Tibial artery (tissue), 4 donors: ENCODE measurements at regions of chr17 and their contacts with region 1.

Region 1: DNA sequence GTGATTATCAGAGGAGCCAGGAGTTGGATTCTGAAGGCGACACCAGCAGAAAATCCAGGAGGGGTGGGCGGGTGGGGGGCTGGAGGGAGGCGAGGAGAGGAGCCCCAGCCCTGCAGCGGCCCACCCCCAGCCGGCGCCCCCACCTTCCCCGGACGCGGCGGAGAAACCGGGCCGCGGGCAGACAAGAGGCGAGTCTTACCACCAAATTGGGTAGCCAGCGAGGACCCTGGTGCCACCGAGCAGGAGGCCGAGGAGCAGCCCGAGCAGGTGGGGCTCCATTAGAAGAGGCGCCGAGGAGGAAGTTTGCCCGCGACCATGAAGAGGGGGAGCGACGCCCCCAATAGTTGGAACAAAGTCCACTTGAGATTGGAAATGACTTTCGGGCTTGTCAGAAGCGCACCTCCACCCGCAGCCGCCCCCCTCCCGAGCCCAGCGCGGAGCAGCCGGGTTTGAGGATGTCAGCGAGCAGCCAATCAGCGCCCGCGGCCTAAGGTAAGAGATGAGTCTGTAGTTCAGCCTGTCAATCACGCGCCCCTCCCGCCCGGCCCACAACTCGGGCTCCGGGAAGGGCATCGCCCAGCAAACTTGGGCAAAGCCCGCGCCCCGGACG is at the start of gene WNT3:
- DNase-seq: no peak
- H3K4me3 ChIP-seq: peak within 1 kb of the TSS; percentile 28
- H3K27ac ChIP-seq: no peak within 1 kb of the TSS
- H3K4me1 ChIP-seq: peaks cover 0 to 24% (median 19%) of the 10 kb centered on the region in 4 donors
- H3K27me3 ChIP-seq: peaks cover 4 to 96% of the 10 kb centered on the region in 2 donors
- CTCF ChIP-seq: no peak

Region 2: GRCh38 chr17:46758623-46759022 is 59.8 kb before region 1 on chr17:
- intact Hi-C with region 1: loop called (anchors 5 kb)
- DNase-seq: no peak
- H3K4me3 ChIP-seq: no peak overlapping the region
- H3K27ac ChIP-seq: no peak overlapping the region
- H3K4me1 ChIP-seq: no peaks in the 10 kb centered on the region
- H3K27me3 ChIP-seq: no peaks in the 10 kb centered on the region
- CTCF ChIP-seq: no peak